Natural killer cell (primary cell): ENCODE measurements at regions of chr7 and their contacts with region 1.

Region 1: GRCh38 chr7:152336754-152337368 is 98.9 kb downstream of the KMT2C start:
- DNase-seq: peak in 1 of 2 donors; percentile 68
- ATAC-seq: peak; percentile 69 to 80 (median 79)
- H3K4me3 ChIP-seq: no peak overlapping the region
- H3K4me3 Mint-ChIP-seq: peak overlapping the region; percentile 87
- H3K27ac ChIP-seq: peak overlapping the region; percentile 82
- H3K27ac Mint-ChIP-seq: peak overlapping the region; percentile 92 to 94
- H3K4me1 ChIP-seq: peaks cover 12% of the 10 kb centered on the region
- H3K4me1 Mint-ChIP-seq: peaks cover 53 to 58% of the 10 kb centered on the region in 2 donors
- H3K27me3 ChIP-seq: no peaks in the 10 kb centered on the region
- H3K27me3 Mint-ChIP-seq: no peaks in the 10 kb centered on the region
- CTCF ChIP-seq: peak; percentile 56

Region 2: GRCh38 chr7:152436111-152436930 is 99.5 kb after region 1 on chr7:
- intact Hi-C with region 1: loop called (anchors 2 kb)
- DNase-seq: peak; percentile 89 to 96
- ATAC-seq: peak; percentile 73 to 89 (median 79)
- H3K4me3 ChIP-seq: peak overlapping the region; percentile 66
- H3K4me3 Mint-ChIP-seq: peak overlapping the region; percentile 91
- H3K27ac ChIP-seq: peak overlapping the region; percentile 91
- H3K27ac Mint-ChIP-seq: peak overlapping the region; percentile 89 to 90
- H3K4me1 ChIP-seq: peaks cover 5% of the 10 kb centered on the region
- H3K4me1 Mint-ChIP-seq: peaks cover 25 to 27% of the 10 kb centered on the region in 2 donors
- H3K27me3 ChIP-seq: no peaks in the 10 kb centered on the region
- H3K27me3 Mint-ChIP-seq: no peaks in the 10 kb centered on the region
- CTCF ChIP-seq: no peak

Region 3: DNA sequence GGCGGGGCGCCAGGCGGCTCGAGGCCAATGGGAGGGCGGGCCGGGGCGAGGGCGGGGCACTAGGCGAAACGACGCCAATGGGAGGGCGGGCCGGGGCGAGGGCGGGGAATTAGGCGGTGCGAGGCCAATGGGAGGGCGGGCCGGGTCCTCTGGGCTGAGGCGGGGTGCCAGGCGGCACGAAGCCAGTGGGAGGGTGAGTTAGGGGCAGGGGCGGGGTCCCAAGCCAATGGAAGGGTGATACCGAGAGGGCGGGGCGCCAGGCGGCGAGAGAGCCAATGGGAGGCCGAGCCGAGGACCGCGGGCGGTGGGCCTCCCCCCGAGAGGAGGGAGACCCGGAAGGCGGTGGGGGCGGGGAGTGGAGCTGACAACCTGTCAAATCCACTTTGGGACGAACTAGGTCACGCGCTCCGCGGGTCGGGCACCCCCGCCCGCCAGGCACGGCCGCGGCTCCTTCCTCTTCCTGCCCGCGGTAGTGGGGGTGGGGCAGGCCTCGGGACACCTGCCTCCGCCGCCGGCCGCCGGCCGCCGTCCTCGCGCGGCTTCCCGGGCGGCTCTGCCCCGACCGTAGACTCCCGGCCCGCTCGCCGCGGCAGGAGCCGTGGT is 126.9 kb after region 1 on chr7:
- intact Hi-C with region 1: loop called (anchors 2 kb)
- DNase-seq: peak; percentile 100
- ATAC-seq: peak; percentile 88 to 97 (median 90)
- H3K4me3 ChIP-seq: peak overlapping the region; percentile 90
- H3K4me3 Mint-ChIP-seq: peak overlapping the region; percentile 93
- H3K27ac ChIP-seq: peak overlapping the region; percentile 92
- H3K27ac Mint-ChIP-seq: peak overlapping the region; percentile 88 to 91
- H3K4me1 ChIP-seq: peaks cover 21% of the 10 kb centered on the region
- H3K4me1 Mint-ChIP-seq: peaks cover 7 to 21% of the 10 kb centered on the region in 2 donors
- H3K27me3 ChIP-seq: no peaks in the 10 kb centered on the region
- H3K27me3 Mint-ChIP-seq: no peaks in the 10 kb centered on the region
- CTCF ChIP-seq: no peak

Region 4: DNA sequence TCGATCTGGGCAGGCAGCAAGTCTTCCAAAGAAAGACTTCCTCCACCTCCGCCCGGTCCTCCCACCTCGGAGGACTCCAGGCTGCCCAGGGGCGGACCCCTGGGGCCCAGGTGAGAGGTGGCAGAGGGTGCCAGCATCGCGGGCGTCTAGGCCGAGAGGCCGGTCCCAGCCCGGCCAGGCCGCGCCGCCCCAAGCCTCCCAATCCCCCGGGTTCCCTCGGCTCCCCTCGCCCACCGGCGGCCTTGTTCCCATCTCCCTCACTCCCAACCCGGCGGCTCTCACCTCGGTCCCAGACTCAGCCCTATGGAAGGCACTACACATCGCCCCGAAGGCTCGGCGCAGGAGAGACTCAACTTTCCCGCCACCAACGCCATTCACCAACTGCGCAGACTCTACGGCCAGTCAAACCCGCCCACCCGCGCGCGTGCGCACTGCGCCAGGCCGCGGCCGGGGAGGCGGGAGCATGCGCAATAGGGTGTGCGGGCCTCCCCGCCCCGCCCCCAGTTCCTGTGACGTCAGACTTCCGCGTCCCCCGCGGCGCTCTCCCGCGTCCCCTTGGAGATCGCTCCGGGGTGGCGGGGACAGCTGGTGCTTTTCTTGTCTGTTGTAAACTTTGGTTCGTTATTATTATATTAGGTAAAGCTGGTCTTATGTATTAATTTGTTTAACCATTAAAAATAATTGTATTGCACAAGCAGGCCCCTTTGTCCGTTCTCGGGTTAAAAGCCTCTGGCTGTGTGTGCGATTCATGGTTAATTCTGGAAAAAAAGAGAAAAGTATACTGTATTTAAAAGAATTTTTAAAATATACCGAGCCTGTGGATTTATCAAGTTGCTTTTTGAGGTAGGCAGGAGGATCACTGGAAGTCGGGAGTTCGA is 339.1 kb after region 1 on chr7 and contains the start of gene XRCC2:
- intact Hi-C with region 1: loop called (anchors 10 kb)
- DNase-seq: peak; percentile 98 to 99
- ATAC-seq: peak; percentile 91 to 96 (median 93)
- H3K4me3 ChIP-seq: peak within 1 kb of the TSS; percentile 61
- H3K4me3 Mint-ChIP-seq: peak within 1 kb of the TSS; percentile 96
- H3K27ac ChIP-seq: peak within 1 kb of the TSS; percentile 80
- H3K27ac Mint-ChIP-seq: peak within 1 kb of the TSS; percentile 93 to 94
- H3K4me1 ChIP-seq: peaks cover 9% of the 10 kb centered on the region
- H3K4me1 Mint-ChIP-seq: peaks cover 6 to 14% of the 10 kb centered on the region in 2 donors
- H3K27me3 ChIP-seq: no peaks in the 10 kb centered on the region
- H3K27me3 Mint-ChIP-seq: no peaks in the 10 kb centered on the region
- CTCF ChIP-seq: no peak
- total RNA-seq, gene XRCC2: 1.0 to 1.3 (median 1.2) TPM

Region 5: GRCh38 chr7:152707766-152708165 is 370.9 kb after region 1 on chr7:
- intact Hi-C with region 1: loop called (anchors 2 kb)
- DNase-seq: no peak
- ATAC-seq: no peak
- H3K4me3 ChIP-seq: no peak overlapping the region
- H3K4me3 Mint-ChIP-seq: no peak overlapping the region
- H3K27ac ChIP-seq: no peak overlapping the region
- H3K27ac Mint-ChIP-seq: no peak overlapping the region
- H3K4me1 ChIP-seq: no peaks in the 10 kb centered on the region
- H3K4me1 Mint-ChIP-seq: no peaks in the 10 kb centered on the region
- H3K27me3 ChIP-seq: no peaks in the 10 kb centered on the region
- H3K27me3 Mint-ChIP-seq: peaks cover 0 to 5% of the 10 kb centered on the region in 2 donors
- CTCF ChIP-seq: no peak